ENCODE measurements at regions of chr1 and their contacts with region 1.

Region 1: DNA sequence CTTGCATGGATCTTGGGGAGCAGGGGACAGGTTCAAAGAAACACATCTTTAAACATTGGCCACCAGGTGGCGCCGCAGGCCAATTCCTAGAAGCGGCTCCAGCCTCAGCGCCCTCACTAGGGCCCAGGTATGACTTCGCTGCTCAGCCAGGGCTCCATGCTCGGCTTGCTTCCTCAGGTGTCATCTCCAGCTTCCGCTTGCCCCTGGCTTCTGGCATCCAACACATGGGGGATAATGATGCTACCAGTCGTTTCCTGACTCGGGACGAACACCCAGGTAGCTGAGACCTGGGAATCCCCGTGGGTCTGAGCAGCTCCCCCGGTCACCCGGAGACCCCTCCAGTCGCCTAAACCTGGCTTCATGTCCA is 8.5 kb upstream of the MEX3A start:
- DNase-seq: peak; percentile 93
- H3K4me3 Mint-ChIP-seq: peak overlapping the region; percentile 10
- H3K27ac Mint-ChIP-seq: peak overlapping the region; percentile 42
- H3K4me1 Mint-ChIP-seq: peaks cover 13% of the 10 kb centered on the region
- H3K27me3 Mint-ChIP-seq: peaks cover 12% of the 10 kb centered on the region

Region 2: GRCh38 chr1:156001682-156002171 is 89.1 kb before region 1 on chr1:
- CTCF ChIA-PET with region 1: no interaction called
- POLR2A ChIA-PET with region 1: no interaction called
- intact Hi-C with region 1: no loop called
- DNase-seq: no peak
- H3K4me3 Mint-ChIP-seq: no peak overlapping the region
- H3K27ac Mint-ChIP-seq: no peak overlapping the region
- H3K4me1 Mint-ChIP-seq: peaks cover 17% of the 10 kb centered on the region
- H3K27me3 Mint-ChIP-seq: no peaks in the 10 kb centered on the region

Region 3: GRCh38 chr1:156104065-156104810 is 13.4 kb after region 1 on chr1:
- CTCF ChIA-PET with region 1: interaction called, 84 read pairs
- POLR2A ChIA-PET with region 1: interaction called, 80 read pairs
- intact Hi-C with region 1: no loop called
- DNase-seq: peak; percentile 74
- H3K4me3 Mint-ChIP-seq: peak overlapping the region; percentile 33
- H3K27ac Mint-ChIP-seq: peak overlapping the region; percentile 93
- H3K4me1 Mint-ChIP-seq: peaks cover 66% of the 10 kb centered on the region
- H3K27me3 Mint-ChIP-seq: no peaks in the 10 kb centered on the region

Region 4: DNA sequence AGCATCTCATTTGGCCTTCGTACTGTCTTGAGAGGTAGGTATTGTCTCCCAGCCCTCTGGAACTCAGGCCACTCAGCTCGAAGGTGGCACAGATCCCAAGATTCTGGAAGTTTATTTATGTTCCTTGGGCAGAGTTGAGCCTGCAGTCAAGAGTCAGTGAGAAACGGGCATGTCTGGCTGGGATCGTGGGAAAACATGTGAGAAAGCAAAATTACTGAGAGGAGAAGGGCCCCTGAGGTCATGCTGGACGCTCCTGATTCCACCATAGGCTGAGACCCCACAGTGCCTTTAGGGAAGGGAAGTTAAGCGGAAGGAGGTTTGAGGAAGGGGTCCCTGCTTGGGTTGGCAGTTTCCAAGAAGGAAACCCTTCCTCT is 50.1 kb after region 1 on chr1:
- CTCF ChIA-PET with region 1: interaction called, 1,097 read pairs
- POLR2A ChIA-PET with region 1: no interaction called
- intact Hi-C with region 1: no loop called
- DNase-seq: no peak
- H3K4me3 Mint-ChIP-seq: no peak overlapping the region
- H3K27ac Mint-ChIP-seq: no peak overlapping the region
- H3K4me1 Mint-ChIP-seq: peaks cover 4% of the 10 kb centered on the region
- H3K27me3 Mint-ChIP-seq: no peaks in the 10 kb centered on the region